IMR-90 (cell line): ENCODE measurements at regions of chr7 and their contacts with region 1.

Region 1: DNA sequence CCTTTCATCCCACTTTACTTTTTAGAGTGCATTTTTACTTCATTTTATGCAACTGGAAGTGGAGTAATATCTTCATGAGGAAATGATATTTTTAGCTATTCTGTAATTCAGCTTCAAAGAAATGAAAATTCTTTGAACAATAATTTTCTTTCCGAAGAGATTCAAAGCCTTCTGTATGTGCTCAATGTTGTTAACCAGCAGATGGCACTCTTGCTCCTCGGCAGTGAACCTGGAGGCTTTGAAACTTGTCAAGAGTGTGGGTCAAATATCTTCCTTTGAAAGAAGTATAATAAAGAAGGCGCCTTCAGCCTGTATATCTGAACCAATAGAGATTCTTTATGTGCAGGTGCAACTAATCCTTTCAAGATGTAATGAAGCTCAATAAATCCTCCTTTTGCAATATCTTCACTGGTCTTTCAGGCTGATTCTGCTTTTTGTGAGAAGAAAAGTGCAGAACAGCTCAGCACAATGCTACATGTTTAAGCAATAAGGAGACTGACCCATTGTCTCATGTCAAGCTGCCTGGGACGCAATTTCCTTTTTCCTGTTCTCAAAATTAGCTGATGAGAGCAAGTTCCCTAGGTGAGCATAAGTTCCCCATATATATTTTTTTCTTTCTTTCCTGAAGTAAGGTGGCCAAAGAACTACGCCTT is 258.4 kb downstream of the SEMA3A start:
- DNase-seq: peak; percentile 81
- ATAC-seq: peak; percentile 95
- H3K4me3 ChIP-seq: no peak overlapping the region
- H3K27ac ChIP-seq: no peak overlapping the region
- H3K4me1 ChIP-seq: no peaks in the 10 kb centered on the region
- H3K27me3 ChIP-seq: no peaks in the 10 kb centered on the region
- CTCF ChIP-seq: peak; percentile 93
- POLR2A ChIP-seq: no peak
- RAD21 ChIP-seq: peak; percentile 95

Region 2: DNA sequence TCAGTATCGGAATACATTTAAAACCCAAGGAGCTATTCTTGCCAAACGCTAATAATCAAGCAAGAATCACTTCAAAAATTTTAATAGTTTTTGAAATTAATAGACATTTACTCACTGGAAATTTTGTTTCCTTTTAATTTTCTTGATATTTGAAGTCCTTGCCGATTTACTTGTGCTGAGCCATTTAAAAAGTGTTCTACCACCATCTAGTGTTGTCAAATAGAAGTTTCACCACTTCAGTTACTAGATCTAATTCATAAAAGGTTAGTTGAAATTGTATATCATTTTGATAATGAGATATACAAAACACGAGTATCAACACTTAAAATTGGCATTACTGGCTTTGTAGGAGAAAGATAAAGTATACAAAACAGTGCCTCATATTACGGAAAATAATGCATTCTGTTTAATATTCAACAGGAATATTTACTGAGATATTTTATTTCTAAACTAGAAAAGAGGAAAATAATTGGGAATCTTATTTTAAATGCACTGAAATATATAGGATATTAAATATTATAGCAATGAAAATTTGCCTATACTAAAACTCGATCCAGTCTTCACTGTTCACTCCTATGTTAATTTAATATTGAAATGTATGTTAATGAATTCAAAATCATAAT is 1915.5 kb after region 1 on chr7:
- CTCF ChIA-PET with region 1: no interaction called
- POLR2A ChIA-PET with region 1: interaction called, 7 read pairs
- dilution Hi-C with region 1: no loop called
- in situ Hi-C with region 1: no loop called
- intact Hi-C with region 1: loop called (anchors 2 kb)
- DNase-seq: peak; percentile 69
- ATAC-seq: 0 out of 2 replicates have a peak, but pooled peaks have one; percentile 35
- H3K4me3 ChIP-seq: no peak overlapping the region
- H3K27ac ChIP-seq: no peak overlapping the region
- H3K4me1 ChIP-seq: no peaks in the 10 kb centered on the region
- H3K27me3 ChIP-seq: no peaks in the 10 kb centered on the region
- CTCF ChIP-seq: peak; percentile 57
- POLR2A ChIP-seq: no peak
- RAD21 ChIP-seq: peak; percentile 61